ENCODE measurements at regions of chr4 and their contacts with region 1.

Region 1: DNA sequence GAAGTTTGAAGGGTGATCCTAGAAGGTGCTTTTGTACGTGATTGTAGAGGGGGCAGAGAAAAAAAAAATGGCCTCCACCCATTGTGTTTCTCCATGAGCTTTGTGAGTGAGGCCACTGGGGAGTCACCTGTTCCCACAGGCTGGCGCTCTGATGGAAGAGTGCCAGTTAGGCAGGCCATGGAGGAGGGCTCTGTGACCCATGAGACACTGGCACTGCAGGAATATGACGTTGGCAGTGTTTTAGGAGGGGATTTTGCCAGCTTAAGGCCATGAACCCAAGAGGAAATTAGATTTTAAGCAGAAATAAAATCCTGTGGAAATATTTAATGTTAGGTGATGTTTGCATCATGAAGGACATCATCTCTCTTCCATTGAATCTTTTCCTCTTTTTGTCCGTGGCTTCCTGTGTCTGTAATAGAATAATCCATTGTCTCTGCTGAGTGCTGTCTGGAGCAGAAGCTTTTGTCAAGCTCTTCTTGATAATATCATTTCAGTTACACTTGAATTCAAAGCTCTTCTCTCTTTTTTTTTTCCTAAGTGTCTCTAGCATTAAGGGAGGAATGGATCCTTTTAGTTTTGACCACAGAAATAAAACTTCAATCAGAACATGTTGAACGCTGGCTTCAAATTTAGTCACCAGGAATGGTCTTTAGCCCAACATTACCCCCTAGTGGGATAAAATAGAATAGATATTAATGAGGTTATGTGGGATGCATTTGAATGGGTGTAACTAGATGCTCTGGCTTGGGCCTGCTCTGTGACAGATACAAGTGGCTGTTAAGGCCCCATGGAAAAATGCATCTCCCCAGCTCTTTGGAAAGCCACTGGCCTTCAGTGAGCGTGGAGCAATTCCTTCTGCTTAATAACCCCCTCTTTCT is 41.0 kb upstream of the UCP1 start:
- DNase-seq: no peak

Region 2: DNA sequence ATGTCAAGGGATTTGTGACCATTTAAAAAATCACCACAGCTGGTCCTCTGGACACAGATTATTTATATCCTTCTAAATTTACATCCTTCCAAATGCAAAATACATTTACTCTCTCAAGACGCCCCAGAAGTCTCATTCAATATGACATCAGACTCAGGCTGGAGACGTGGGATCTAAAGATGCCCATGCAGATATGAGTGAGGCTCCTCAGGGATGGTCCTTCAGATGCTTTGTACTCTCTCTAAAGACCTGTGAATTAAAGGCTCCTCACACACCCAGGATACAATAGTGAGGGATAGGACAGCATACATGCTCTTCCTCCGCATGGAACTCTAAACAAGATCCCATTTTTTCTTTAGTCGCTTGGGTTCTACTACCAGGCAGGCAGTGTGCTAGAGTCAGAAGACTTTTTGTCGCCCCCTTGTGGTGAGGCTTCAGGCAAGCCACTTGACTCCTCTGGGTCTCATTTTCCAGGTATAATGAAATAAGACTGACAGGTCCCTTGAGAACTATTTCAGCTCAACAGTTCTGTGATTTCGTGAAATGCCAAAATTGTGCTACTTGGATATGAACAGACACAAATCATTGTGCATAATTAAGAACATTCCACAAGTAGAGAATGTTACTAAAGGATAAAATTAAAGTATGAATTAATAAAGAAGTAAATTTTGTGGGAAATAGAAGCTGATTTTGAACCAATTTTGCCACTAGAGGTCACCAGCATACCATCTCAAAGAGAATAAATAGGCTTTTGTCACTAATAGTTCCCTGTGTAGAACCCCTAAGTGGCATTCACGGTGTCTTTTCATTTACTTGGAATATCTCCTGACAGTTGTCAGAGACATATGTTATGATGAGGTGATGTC is 250.0 kb before region 1 on chr4:
- intact Hi-C with region 1: loop called (anchors 5 kb)
- DNase-seq: peak; percentile 82

Region 3: DNA sequence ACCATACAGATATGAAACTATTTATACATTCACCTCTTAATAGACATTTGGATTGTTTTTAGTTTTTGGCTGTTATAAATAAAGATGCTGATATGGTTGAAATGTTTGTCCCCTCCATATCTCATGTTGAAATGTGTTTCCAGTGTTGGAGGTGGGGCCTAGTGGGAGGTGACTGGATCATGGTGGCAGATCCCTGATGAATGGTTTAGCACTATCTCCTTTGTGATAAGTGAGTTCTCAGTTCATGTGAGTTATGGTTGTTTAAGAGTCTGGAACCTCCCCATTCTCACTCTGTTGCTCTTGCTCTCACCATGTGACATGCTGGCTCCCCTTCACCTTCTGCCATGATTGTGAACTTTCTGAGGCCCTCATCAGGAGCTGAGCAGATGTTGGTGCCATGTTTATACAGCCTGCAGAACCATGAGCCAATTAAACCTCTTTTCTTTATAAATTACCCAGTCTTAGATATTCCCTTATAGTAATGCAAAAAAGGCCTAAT is 170.1 kb before region 1 on chr4:
- intact Hi-C with region 1: loop called (anchors 10 kb)
- DNase-seq: no peak

Region 4: DNA sequence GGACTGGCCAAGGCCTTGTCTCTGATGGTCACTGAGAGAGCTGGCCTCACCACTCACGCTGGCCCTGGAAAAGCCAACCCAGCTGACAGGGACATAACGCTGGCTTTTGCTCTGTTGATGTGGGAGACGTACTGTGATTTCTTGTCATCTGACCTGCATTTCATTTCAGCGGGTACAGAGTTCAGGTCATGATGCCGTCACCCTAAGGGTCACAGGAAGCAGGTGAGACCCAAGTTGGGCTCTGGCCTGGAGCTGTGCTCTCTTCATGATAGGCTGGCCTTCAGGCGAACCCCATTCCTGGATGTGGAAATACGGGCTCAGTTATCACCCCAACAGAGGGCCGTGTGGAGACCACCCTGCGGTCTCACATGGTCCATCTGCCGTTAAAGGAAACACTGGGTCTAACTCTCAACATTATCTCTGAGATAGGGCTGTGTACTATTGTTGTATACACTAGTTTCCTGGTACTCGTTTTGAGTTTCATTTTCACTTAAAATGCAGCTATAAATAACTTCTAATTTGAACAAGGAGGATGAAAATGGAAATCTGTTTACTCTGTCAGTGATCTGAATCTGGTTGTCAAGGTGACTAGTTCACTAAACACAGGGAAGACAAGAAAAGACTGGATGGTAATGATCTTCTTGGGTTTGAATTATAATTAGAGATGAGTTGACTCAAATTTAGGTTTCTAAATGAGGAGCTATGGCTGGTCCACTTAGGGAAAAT is 57.3 kb after region 1 on chr4:
- intact Hi-C with region 1: no loop called
- DNase-seq: no peak

Measured in cardiac septum (tissue), 1 donor.